ENCODE measurements at regions of chr4 and their contacts with region 1.

Region 1: DNA sequence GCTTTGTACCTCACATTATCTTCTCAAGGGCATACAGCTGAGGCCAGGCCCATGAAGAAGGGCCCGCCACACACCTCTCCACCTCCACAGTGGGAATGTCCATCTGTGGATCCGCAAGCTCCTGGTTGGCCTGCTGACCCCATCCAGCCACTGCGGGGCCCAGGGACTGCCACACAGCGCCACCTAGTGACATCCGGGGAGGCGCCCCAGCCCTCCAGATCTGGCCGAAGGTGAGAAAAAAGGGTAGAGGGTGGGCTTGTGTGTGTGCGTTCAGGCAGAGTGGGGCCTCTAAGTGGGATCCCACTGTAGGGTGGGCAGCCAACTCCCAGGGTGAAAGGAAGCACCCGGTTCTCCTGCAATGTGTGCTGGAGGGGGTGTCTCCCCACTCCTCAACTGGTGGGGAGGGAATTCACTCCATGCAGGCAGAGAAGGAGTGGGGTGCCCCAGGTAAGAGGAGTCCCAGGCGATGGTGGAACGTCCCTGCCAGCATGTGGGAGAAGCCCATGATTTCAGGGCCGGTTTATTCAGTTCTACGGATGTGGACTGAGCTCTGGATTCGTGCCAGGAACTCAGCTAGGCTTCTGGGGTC is 117.3 kb downstream of the ENPP6 start:
- DNase-seq: peak in 1 of 2 experiments; percentile 94
- H3K4me3 ChIP-seq: no peak overlapping the region
- H3K27ac ChIP-seq: no peak overlapping the region
- H3K4me1 ChIP-seq: peaks cover 0 to 6% (median 1%) of the 10 kb centered on the region in 4 experiments; a peak in 4 of 7 replicates
- H3K27me3 ChIP-seq: peaks cover 0 to 9% (median 2%) of the 10 kb centered on the region in 4 experiments; a peak in 2 of 7 replicates
- CTCF ChIP-seq: peak in 2 of 3 experiments; percentile 89 to 94; a peak in 3 of 4 replicates
- EP300 ChIP-seq: no peak
- POLR2A ChIP-seq: no peak
- RAD21 ChIP-seq: peak; percentile 90 to 93

Region 2: DNA sequence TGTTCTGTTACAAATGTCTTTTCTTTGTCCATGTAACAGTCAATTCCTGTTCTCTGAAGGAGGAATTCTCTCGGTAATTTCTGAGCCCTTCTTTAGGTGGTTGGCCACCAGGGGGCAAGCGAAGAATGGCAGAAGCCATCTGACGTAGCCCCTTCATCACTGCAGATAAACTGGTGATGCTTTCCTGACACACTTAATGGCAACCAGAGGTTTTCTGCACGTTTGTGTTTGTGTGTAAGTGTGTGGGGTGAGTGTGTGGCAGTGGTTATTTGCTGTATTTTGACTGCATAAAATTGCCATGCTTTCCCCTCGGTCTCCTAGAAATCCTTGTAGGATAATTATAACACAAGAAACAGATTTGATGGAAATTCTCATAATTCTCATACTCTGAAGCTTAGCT is 260.1 kb before region 1 on chr4:
- CTCF ChIA-PET with region 1: interaction called, 91 read pairs
- POLR2A ChIA-PET with region 1: no interaction called
- DNase-seq: peak in 1 of 2 experiments; percentile 86
- H3K4me3 ChIP-seq: no peak overlapping the region
- H3K27ac ChIP-seq: no peak overlapping the region
- H3K4me1 ChIP-seq: peaks cover 0 to 2% (median 0%) of the 10 kb centered on the region in 4 experiments; a peak in 1 of 7 replicates
- H3K27me3 ChIP-seq: no peaks in the 10 kb centered on the region
- CTCF ChIP-seq: peak; percentile 57 to 87 (median 87)
- EP300 ChIP-seq: no peak
- POLR2A ChIP-seq: no peak
- RAD21 ChIP-seq: peak; percentile 97 to 99

Region 3: DNA sequence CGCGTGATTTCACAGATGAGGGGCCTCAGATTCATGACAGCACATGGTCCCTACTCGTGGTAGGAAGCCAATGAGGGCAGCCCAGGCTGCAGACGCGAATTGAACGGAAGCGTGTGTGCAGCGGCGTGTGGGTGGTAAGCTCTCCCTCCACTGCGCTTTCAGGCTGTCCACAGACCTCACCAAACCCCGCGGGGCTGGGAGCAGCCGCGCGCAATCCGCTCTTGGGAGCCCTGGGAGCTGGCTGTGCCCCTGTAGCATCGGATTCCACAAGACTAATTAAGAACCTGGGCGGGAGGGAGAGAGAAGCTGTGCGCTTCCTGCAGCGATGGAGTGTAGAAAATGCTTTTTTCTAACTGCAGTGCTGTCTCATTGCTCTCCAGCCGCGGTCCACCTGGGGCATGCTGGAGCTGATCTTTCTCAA is 60.4 kb before region 1 on chr4:
- CTCF ChIA-PET with region 1: interaction called, 13 read pairs
- POLR2A ChIA-PET with region 1: no interaction called
- DNase-seq: peak in 1 of 2 experiments; percentile 58
- H3K4me3 ChIP-seq: peak overlapping the region in 3 of 4 experiments; percentile 5 to 52 (median 16); a peak in 4 of 8 replicates
- H3K27ac ChIP-seq: no peak overlapping the region
- H3K4me1 ChIP-seq: peaks cover 0 to 5% (median 2%) of the 10 kb centered on the region in 4 experiments; a peak in 3 of 7 replicates
- H3K27me3 ChIP-seq: peaks cover 1 to 17% (median 10%) of the 10 kb centered on the region in 4 experiments; a peak in 6 of 7 replicates
- CTCF ChIP-seq: peak in 1 of 3 experiments; percentile 1; a peak in 1 of 4 replicates
- EP300 ChIP-seq: no peak
- POLR2A ChIP-seq: no peak
- RAD21 ChIP-seq: no peak

Region 4: GRCh38 chr4:184114431-184114830 is 14.0 kb after region 1 on chr4:
- CTCF ChIA-PET with region 1: interaction called, 87 read pairs
- POLR2A ChIA-PET with region 1: no interaction called
- DNase-seq: no peak
- H3K4me3 ChIP-seq: no peak overlapping the region
- H3K27ac ChIP-seq: no peak overlapping the region
- H3K4me1 ChIP-seq: no peaks in the 10 kb centered on the region
- H3K27me3 ChIP-seq: no peaks in the 10 kb centered on the region
- CTCF ChIP-seq: peak in 1 of 3 experiments; percentile 31; a peak in 1 of 4 replicates
- EP300 ChIP-seq: no peak
- POLR2A ChIP-seq: no peak
- RAD21 ChIP-seq: no peak

Region 5: GRCh38 chr4:184156163-184156920 is 56.0 kb after region 1 on chr4:
- CTCF ChIA-PET with region 1: interaction called, 29 read pairs
- POLR2A ChIA-PET with region 1: no interaction called
- DNase-seq: no peak
- H3K4me3 ChIP-seq: no peak overlapping the region
- H3K27ac ChIP-seq: no peak overlapping the region
- H3K4me1 ChIP-seq: no peaks in the 10 kb centered on the region
- H3K27me3 ChIP-seq: no peaks in the 10 kb centered on the region; a peak in 1 of 7 replicates
- CTCF ChIP-seq: no peak
- EP300 ChIP-seq: no peak
- POLR2A ChIP-seq: no peak
- RAD21 ChIP-seq: no peak

Measured in H1 (cell line).